ENCODE measurements at regions of chr16 and their contacts with region 1.

Region 1: GRCh38 chr16:74480141-74481029 is 59.1 kb upstream of the CLEC18B start:
- ATAC-seq: peak in 3 of 8 experiments; percentile 98 to 99 (median 98)
- H3K4me3 ChIP-seq: no peak overlapping the region
- H3K27ac ChIP-seq: no peak overlapping the region
- H3K4me1 ChIP-seq: no peaks in the 10 kb centered on the region

Region 2: GRCh38 chr16:74257061-74257460 is 223.3 kb before region 1 on chr16:
- in situ Hi-C with region 1: no loop called
- ATAC-seq: no peak
- H3K4me3 ChIP-seq: no peak overlapping the region
- H3K27ac ChIP-seq: no peak overlapping the region
- H3K4me1 ChIP-seq: no peaks in the 10 kb centered on the region

Region 3: DNA sequence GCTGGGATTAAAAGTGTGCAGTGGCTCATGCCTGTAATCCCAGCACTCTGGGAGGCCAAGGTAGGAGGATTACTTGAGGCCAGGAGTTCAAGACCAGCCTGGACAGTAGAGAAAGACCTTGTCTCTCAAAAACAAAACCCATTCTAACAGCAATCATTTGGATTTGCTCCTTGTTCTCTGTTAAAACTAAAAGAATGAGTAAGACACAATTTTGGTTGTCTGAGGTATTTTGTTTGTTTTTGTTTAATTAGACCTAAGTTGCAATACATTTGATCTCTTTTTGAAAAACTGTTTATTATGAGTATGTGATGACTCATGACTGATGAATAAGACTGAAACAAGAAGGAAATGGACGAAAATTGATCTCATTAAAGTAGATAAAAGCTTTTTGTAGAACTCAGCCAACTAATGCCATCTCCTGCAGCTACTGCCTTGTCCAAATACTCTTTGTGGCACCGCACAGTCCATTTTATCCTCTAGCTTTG is 97.5 kb after region 1 on chr16:
- in situ Hi-C with region 1: loop called in 1 of 9 experiments (anchors 25 kb)
- ATAC-seq: peak in 1 of 8 experiments; percentile 17
- H3K4me3 ChIP-seq: no peak overlapping the region
- H3K27ac ChIP-seq: no peak overlapping the region
- H3K4me1 ChIP-seq: no peaks in the 10 kb centered on the region

Region 4: DNA sequence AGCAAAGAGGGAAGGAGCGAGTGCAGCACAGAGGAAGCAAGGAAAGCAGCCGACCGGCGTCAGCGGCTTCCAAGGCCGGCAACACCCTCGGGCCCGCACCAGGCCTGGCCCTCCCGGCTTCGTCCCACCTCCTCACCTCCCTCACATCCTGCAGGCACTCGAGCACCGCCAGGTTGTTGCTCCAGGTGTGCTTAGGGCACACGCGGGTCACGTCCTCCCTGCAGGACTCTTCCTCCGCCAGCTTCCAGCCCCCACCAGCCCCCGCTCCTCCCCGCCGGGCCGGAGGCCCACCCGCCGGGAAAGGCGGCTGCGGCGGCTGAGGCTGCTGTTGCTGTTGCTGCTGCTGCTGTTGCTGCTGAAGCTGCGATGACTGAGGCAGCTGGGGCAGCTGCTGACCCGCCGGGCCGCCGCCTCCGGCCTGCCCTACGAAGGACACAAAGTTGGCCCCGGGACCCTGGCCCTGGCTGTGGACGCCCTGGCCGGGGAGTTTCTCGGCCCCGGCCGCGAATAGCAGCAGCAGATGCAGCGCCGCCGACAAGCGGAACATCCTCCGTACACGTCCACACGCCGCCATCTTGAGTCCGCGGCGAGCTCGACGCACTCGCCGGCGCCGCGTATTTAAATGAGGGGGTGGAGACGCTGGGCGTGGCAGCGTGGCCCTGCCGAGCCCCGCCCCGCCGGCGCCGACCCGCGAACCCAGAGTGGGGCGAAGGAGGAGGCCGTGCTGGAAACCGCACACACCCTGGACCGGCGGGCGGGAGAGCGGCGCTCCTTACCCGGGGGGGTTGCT is 126.3 kb after region 1 on chr16 and contains the start of gene GLG1:
- in situ Hi-C with region 1: loop called in 1 of 9 experiments (anchors 25 kb)
- ATAC-seq: peak; percentile 85 to 95 (median 93)
- H3K4me3 ChIP-seq: peak within 1 kb of the TSS; percentile 86 to 97 (median 91)
- H3K27ac ChIP-seq: peak within 1 kb of the TSS; percentile 97 to 100
- H3K4me1 ChIP-seq: peaks cover 15 to 21% of the 10 kb centered on the region in 2 donors
- total RNA-seq, gene GLG1: 69.9 to 171 (median 90.4) TPM